ENCODE measurements at regions of chr3 and their contacts with region 1.

Region 1: DNA sequence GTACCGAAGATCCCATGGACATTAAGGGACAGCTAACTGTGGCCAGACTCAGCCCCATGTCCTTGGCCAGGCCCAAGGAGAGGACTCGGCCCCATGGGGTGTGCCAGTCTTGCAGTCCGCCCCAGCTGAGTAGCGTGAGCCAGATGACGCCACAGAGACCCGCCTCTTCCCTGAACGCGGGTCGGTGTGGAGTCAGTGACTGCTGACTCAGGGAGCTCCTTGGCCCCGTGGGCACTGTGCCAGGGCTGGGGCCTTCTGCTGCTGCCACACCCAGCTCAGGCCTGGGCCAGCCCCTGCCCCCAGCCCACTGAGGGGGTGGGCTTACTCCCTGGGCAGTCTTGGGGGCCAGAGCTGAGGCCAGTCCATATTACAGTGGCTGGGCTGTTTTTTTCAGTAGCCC is 52.8 kb downstream of the PLXNA1 start:
- DNase-seq: peak; percentile 48 to 59
- H3K4me3 ChIP-seq: no peak overlapping the region
- H3K27ac ChIP-seq: peak overlapping the region in 1 of 3 donors; percentile 17
- H3K4me1 ChIP-seq: peaks cover 0 to 4% of the 10 kb centered on the region in 2 donors
- H3K27me3 ChIP-seq: no peaks in the 10 kb centered on the region
- CTCF ChIP-seq: no peak
- POLR2A ChIP-seq: no peak

Region 2: GRCh38 chr3:126737531-126737930 is 298.1 kb before region 1 on chr3:
- intact Hi-C with region 1: no loop called
- DNase-seq: no peak
- H3K4me3 ChIP-seq: no peak overlapping the region
- H3K27ac ChIP-seq: no peak overlapping the region
- H3K4me1 ChIP-seq: no peaks in the 10 kb centered on the region
- H3K27me3 ChIP-seq: no peaks in the 10 kb centered on the region
- CTCF ChIP-seq: no peak
- POLR2A ChIP-seq: no peak

Region 3: GRCh38 chr3:127083778-127084670 is 48.3 kb after region 1 on chr3:
- intact Hi-C with region 1: loop called (anchors 5 kb)
- DNase-seq: no peak
- H3K4me3 ChIP-seq: no peak overlapping the region
- H3K27ac ChIP-seq: no peak overlapping the region
- H3K4me1 ChIP-seq: no peaks in the 10 kb centered on the region
- H3K27me3 ChIP-seq: no peaks in the 10 kb centered on the region
- CTCF ChIP-seq: no peak
- POLR2A ChIP-seq: no peak

Measured in thyroid gland (tissue), 4 donors.